Right ventricle myocardium superior (tissue), 1 donor: ENCODE measurements at regions of chr12 and their contacts with region 1.

Region 1: GRCh38 chr12:29552324-29552927 is 54.9 kb upstream of the OVCH1 start:
- DNase-seq: peak; percentile 73
- ATAC-seq: peak; percentile 93

Region 2: DNA sequence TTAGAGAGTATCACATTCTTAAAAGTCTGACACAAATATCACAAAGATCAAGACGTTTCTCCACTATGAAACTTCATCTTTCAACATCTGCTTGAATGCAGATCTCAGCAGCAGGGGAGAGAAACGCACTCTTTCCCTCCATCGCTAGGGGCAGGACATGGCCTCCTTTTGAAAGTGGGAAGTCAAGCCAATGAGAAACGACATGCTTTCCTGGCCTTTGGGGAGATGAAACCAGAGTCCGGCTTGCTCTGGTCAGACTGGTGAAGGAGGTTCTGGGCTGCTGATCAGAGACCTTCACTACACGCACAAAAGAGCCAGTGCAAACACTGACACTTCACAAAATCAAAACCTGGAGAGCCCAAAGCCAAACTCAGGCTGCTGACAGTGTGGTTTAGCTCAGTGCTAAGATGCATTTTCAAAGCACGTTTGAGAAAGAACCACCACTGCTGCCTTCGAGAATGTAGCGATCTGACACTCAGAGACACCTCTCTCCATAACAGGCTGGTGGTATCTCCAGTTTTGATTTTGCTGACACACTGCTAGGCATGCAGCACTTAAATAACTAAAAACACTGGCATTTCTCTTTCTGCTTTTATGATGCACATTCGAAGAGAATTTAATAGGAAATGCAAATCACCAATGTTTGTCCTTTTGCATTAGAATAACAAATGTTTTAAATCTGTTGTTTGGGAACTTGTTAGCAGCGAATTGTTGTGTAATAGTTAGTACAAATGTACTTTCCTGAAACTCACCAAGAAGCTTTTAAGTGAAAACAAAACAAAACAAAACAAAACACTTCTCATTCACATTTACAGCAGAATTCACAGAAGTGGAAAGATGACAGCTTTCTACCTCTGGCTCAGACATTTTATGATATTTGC is 39.0 kb after region 1 on chr12:
- intact Hi-C with region 1: no loop called
- DNase-seq: no peak
- ATAC-seq: peak; percentile 91

Region 3: GRCh38 chr12:29733060-29733459 is 180.6 kb after region 1 on chr12:
- intact Hi-C with region 1: loop called (anchors 10 kb)
- DNase-seq: no peak
- ATAC-seq: no peak